ENCODE measurements at regions of chr2 and their contacts with region 1.

Region 1: GRCh38 chr2:20642055-20642971 is 8.6 kb downstream of the HS1BP3 start:
- DNase-seq: peak; percentile 64
- ATAC-seq: peak; percentile 98
- H3K4me3 ChIP-seq: no peak overlapping the region
- H3K27ac ChIP-seq: no peak overlapping the region
- H3K4me1 ChIP-seq: peaks cover 7% of the 10 kb centered on the region
- H3K27me3 ChIP-seq: no peaks in the 10 kb centered on the region
- CTCF ChIP-seq: peak; percentile 99
- EP300 ChIP-seq: peak in 1 of 2 experiments; percentile 49; a peak in 1 of 4 replicates
- POLR2A ChIP-seq: no peak
- RAD21 ChIP-seq: peak; percentile 100

Region 2: DNA sequence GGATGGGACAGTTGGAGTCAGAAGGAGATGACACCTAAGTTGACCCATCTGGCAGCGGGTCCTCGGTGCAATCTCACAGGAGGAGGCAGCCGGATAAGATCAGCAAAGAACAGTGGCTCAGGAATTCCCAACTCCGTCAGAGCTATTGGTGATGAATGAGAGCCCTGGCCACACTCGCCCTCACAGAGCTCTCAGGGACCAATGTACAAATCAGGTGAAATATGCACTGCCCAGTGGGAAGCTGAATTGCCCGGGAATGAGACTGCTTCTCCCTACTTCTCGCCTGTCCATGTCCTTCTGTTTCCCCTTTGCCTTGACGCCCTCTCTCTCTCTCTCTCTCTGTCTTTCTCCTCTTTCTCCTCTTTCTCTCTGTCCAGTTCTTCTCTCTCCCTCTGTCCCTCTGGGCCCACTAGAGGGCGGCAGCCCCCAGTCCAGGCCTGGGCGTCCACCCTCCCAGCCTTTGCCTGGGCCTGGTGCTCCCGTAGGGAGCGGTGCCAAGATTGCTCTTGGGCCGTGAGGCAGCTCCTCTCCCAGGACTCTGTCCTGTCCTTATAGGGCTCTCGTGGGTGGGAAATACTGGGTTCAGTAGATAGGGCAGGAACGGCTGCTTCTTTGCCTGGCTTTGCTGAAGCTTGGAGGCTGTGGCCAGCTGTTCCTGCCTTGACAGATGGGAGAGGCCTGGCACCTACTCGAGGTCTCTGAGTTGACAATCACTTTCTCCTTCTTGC is 263.4 kb before region 1 on chr2:
- CTCF ChIA-PET with region 1: interaction called, 10 read pairs
- POLR2A ChIA-PET with region 1: interaction called, 7 read pairs
- in situ Hi-C with region 1: no loop called
- intact Hi-C with region 1: loop called (anchors 1 kb)
- DNase-seq: peak; percentile 80
- ATAC-seq: peak; percentile 98
- H3K4me3 ChIP-seq: peak overlapping the region in 2 of 3 experiments; percentile 21 to 59; a peak in 2 of 6 replicates
- H3K27ac ChIP-seq: no peak overlapping the region
- H3K4me1 ChIP-seq: peaks cover 51% of the 10 kb centered on the region
- H3K27me3 ChIP-seq: peaks cover 2 to 11% of the 10 kb centered on the region in 2 experiments; a peak in 2 of 5 replicates
- CTCF ChIP-seq: peak; percentile 98
- EP300 ChIP-seq: no peak
- POLR2A ChIP-seq: no peak
- RAD21 ChIP-seq: peak; percentile 88

Region 3: GRCh38 chr2:20398956-20399567 is 243.3 kb before region 1 on chr2:
- CTCF ChIA-PET with region 1: interaction called, 44 read pairs
- POLR2A ChIA-PET with region 1: interaction called, 3 read pairs
- in situ Hi-C with region 1: loop called (anchors 5 kb)
- intact Hi-C with region 1: loop called (anchors 1 kb)
- DNase-seq: no peak
- ATAC-seq: no peak
- H3K4me3 ChIP-seq: no peak overlapping the region
- H3K27ac ChIP-seq: no peak overlapping the region
- H3K4me1 ChIP-seq: no peaks in the 10 kb centered on the region
- H3K27me3 ChIP-seq: peaks cover 2 to 38% of the 10 kb centered on the region in 2 experiments
- CTCF ChIP-seq: no peak
- EP300 ChIP-seq: no peak
- POLR2A ChIP-seq: no peak
- RAD21 ChIP-seq: no peak

Region 4: DNA sequence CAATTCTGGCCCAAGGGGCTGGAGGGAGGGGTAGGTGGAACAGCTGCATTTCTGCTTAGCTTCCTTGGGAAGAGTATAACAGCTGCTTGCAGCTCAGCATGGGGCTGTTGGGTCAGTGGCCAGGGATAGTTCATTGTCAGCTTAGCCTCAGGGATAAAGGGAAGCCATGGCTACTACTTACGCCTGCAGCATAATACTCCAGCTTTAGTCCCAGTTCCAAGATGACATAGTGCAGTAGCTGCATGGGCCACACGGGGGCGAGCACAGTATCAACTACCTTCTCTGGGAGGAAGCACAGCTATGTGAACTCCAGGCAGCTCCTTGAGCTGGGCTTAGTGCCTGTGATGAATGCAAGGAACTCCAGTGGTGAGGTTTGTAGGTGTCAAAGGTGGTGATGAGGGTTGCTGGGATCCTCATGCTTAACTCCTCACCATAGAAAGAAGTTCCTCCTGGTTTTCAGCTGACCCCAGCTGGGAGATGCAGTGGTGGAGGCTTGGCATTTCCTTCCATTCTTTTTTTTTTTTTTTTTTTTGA is 230.9 kb before region 1 on chr2:
- CTCF ChIA-PET with region 1: interaction called, 29 read pairs
- POLR2A ChIA-PET with region 1: interaction called, 10 read pairs
- in situ Hi-C with region 1: no loop called
- intact Hi-C with region 1: loop called (anchors 1 kb)
- DNase-seq: peak; percentile 79
- ATAC-seq: peak; percentile 99
- H3K4me3 ChIP-seq: no peak overlapping the region
- H3K27ac ChIP-seq: no peak overlapping the region
- H3K4me1 ChIP-seq: peaks cover 36% of the 10 kb centered on the region
- H3K27me3 ChIP-seq: no peaks in the 10 kb centered on the region; a peak in 1 of 5 replicates
- CTCF ChIP-seq: peak; percentile 97
- EP300 ChIP-seq: no peak
- POLR2A ChIP-seq: no peak
- RAD21 ChIP-seq: peak; percentile 86

Measured in HepG2 (cell line).